ENCODE measurements at regions of chr15 and their contacts with region 1.

Region 1: DNA sequence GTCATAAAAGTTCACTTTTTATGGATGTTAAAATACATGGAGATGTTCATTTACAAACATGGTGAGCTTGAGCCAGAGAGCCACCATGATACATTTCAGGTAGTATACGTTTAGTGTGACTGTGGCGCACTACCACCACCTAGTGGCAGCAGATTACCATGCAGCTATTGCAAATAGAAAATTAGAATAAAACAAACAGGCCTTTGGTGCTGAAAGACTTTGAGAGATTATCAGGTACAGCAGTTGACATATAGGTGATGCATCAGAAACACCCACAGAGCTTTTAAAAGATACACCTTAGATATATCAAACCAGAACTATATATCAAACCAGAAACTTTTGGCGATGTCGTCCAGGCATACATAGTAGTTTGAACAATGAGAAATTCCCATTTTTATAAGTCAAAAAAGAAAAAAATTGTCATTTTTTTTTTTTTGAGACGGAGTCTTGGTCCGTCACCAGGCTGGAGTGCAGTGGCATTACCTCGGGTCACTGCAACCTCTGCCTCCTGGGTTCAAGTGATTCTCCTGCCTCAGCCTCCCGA is 42.0 kb upstream of the ICE2 start:
- DNase-seq: peak; percentile 90
- ATAC-seq: peak; percentile 68
- H3K4me3 Mint-ChIP-seq: no peak overlapping the region
- H3K27ac Mint-ChIP-seq: peak overlapping the region; percentile 41
- H3K4me1 Mint-ChIP-seq: peaks cover 45% of the 10 kb centered on the region
- H3K27me3 Mint-ChIP-seq: no peaks in the 10 kb centered on the region

Region 2: DNA sequence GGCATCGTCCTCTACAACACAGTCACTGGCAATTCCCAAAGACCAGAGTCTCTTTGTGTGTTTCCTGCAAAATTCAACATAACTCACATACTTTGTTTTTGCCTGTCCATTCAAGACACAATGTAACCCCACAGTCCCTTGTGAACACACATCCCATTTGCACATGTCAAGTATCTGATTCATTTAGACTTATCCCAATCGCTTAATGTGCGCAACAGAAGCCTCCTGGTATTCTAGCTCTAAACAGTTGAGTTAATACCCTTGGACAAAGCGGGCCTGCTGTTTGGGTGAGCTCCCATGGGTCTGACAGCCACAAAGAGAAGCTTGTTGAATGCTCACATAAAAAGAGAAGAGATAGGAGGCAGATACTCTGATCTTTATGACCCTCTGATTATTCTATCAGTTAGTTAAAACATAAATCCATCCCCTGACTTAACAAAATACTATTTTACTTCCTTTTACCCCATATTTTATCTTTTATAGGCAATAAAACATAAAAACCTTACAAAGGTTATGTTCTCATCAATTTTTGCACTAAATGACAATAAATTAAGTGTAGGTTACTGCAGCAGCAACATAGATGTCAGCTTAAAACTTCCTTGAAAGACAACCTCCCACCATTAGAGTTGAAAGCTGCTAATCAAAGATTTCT is 202.6 kb before region 1 on chr15:
- CTCF ChIA-PET with region 1: no interaction called
- POLR2A ChIA-PET with region 1: no interaction called
- intact Hi-C with region 1: no loop called
- DNase-seq: no peak
- ATAC-seq: no peak
- H3K4me3 Mint-ChIP-seq: no peak overlapping the region
- H3K27ac Mint-ChIP-seq: no peak overlapping the region
- H3K4me1 Mint-ChIP-seq: peaks cover 4% of the 10 kb centered on the region
- H3K27me3 Mint-ChIP-seq: peaks cover 3% of the 10 kb centered on the region

Region 3: GRCh38 chr15:60478566-60479360 is 42.1 kb before region 1 on chr15 and contains the start of gene ICE2:
- CTCF ChIA-PET with region 1: interaction called, 6 read pairs
- POLR2A ChIA-PET with region 1: interaction called, 4 read pairs
- intact Hi-C with region 1: loop called (anchors 1 to 5 kb)
- DNase-seq: peak; percentile 98
- ATAC-seq: peak; percentile 93
- H3K4me3 Mint-ChIP-seq: peak within 1 kb of the TSS; percentile 91
- H3K27ac Mint-ChIP-seq: peak within 1 kb of the TSS; percentile 98
- H3K4me1 Mint-ChIP-seq: peaks cover 55% of the 10 kb centered on the region
- H3K27me3 Mint-ChIP-seq: no peaks in the 10 kb centered on the region
- total RNA-seq, gene ICE2: 72.8 to 81.6 TPM

Region 4: DNA sequence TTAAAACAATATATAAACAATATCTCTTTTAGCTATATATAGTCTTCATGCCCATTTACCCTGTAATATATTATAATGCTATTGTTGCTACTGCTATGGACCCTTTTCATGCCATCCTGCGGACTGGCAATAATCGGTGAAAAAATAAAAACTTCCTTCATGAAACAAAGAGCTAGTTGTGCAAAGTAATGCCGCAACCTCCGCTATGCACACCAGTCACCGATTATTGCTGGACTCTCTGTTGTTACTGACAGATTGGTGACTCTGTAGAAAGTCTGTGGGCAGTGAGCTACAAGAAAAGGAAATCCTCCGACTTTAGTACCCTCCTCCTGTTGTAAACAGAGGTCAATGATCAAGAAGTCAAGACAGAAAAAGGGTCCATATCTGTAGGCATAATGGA is 24.0 kb before region 1 on chr15:
- CTCF ChIA-PET with region 1: interaction called, 12 read pairs
- POLR2A ChIA-PET with region 1: no interaction called
- intact Hi-C with region 1: no loop called
- DNase-seq: no peak
- ATAC-seq: no peak
- H3K4me3 Mint-ChIP-seq: no peak overlapping the region
- H3K27ac Mint-ChIP-seq: no peak overlapping the region
- H3K4me1 Mint-ChIP-seq: no peaks in the 10 kb centered on the region
- H3K27me3 Mint-ChIP-seq: no peaks in the 10 kb centered on the region

Region 5: GRCh38 chr15:60548101-60548500 is 27.2 kb after region 1 on chr15:
- CTCF ChIA-PET with region 1: interaction called, 60 read pairs
- POLR2A ChIA-PET with region 1: interaction called, 7 read pairs
- intact Hi-C with region 1: no loop called
- DNase-seq: peak; percentile 84
- ATAC-seq: peak; percentile 83
- H3K4me3 Mint-ChIP-seq: peak overlapping the region; percentile 61
- H3K27ac Mint-ChIP-seq: peak overlapping the region; percentile 96
- H3K4me1 Mint-ChIP-seq: peaks cover 97% of the 10 kb centered on the region
- H3K27me3 Mint-ChIP-seq: no peaks in the 10 kb centered on the region

Region 6: GRCh38 chr15:60573936-60574335 is 53.0 kb after region 1 on chr15:
- CTCF ChIA-PET with region 1: interaction called, 38 read pairs
- POLR2A ChIA-PET with region 1: no interaction called
- intact Hi-C with region 1: loop called in 1 of 2 experiments (anchors 2 kb)
- DNase-seq: peak; percentile 70
- ATAC-seq: peak; percentile 68
- H3K4me3 Mint-ChIP-seq: peak overlapping the region; percentile 58
- H3K27ac Mint-ChIP-seq: peak overlapping the region; percentile 96
- H3K4me1 Mint-ChIP-seq: peaks cover 88% of the 10 kb centered on the region
- H3K27me3 Mint-ChIP-seq: no peaks in the 10 kb centered on the region

Region 7: GRCh38 chr15:60580650-60581376 is 59.9 kb after region 1 on chr15:
- CTCF ChIA-PET with region 1: interaction called, 38 read pairs
- POLR2A ChIA-PET with region 1: interaction called, 3 read pairs
- intact Hi-C with region 1: loop called (anchors 1 to 2 kb)
- DNase-seq: peak; percentile 64
- ATAC-seq: peak; percentile 80
- H3K4me3 Mint-ChIP-seq: peak overlapping the region; percentile 54
- H3K27ac Mint-ChIP-seq: peak overlapping the region; percentile 87
- H3K4me1 Mint-ChIP-seq: peaks cover 90% of the 10 kb centered on the region
- H3K27me3 Mint-ChIP-seq: no peaks in the 10 kb centered on the region

Region 8: DNA sequence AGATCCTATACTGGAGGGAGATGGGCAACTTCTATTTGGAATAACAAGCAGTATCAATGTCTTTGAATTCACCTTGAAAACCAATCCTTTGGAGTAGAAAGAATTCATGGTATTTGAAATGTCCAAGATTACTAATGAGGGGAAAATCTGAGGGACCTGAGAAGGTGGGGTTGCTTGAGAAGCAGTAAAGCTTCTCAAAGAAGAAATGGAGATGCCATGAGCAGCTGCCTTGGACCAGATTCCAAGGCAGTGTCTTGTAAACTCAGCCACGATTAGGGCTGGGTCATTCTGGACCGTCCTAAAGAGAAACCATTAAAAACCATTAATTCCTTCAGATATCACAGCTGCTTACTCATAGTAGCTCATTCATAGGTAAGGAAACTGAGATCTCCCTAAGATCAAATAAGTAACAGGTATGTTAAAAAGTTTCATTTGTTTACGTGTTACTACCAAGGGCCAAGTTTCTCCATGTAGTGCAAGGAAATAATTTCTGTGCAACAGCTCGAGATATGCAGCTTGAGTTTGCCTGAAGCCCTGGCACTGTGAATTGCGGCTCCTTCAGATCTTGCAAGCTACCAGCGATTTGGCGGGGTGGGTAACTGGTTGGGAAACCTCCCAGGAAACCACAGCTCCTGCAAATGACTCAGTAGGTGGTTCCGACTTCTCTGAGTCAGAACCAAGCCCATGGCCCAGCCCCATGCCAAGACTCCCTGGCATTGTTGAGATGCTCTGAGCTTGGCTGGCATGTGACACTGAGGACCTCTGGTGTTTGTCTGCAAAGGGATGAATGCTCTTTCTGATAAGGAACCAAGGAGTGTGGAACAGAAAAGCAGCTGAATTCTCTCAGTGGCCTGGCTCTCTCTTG is 411.4 kb after region 1 on chr15:
- CTCF ChIA-PET with region 1: interaction called, 14 read pairs
- POLR2A ChIA-PET with region 1: no interaction called
- intact Hi-C with region 1: no loop called
- DNase-seq: peak; percentile 79
- ATAC-seq: peak; percentile 95
- H3K4me3 Mint-ChIP-seq: no peak overlapping the region
- H3K27ac Mint-ChIP-seq: no peak overlapping the region
- H3K4me1 Mint-ChIP-seq: peaks cover 11% of the 10 kb centered on the region
- H3K27me3 Mint-ChIP-seq: peaks cover 6% of the 10 kb centered on the region